Naive thymus-derived CD4-positive, alpha-beta T cell (primary cell): ENCODE measurements at regions of chrX and their contacts with region 1.

Region 1: DNA sequence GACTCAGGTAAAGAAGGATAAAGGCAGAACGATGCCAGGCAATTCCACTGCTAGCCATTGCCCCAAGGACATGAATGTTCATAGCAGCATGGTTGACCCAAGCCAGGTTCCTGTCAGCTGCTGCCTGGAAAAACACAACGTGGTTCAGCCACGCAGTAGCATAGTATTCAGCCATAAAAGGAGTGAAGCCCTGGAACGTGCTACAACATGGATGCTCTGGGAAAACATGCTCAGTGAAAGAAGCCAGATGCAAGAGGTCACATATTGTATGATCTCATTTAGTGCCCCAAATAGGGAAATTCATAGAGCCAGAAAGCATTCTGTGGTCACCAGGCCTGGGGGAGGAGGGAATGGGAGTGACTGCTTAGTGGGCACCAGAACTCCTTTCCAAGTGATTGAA is 129.8 kb downstream of the GPR143 start:
- DNase-seq: no peak
- ATAC-seq: no peak
- H3K4me3 ChIP-seq: no peak overlapping the region
- H3K4me3 Mint-ChIP-seq: no peak overlapping the region
- H3K27ac ChIP-seq: no peak overlapping the region
- H3K27ac Mint-ChIP-seq: no peak overlapping the region
- H3K4me1 ChIP-seq: no peaks in the 10 kb centered on the region
- H3K4me1 Mint-ChIP-seq: peaks cover 6 to 45% (median 32%) of the 10 kb centered on the region in 7 donors
- H3K27me3 ChIP-seq: no peaks in the 10 kb centered on the region
- H3K27me3 Mint-ChIP-seq: no peaks in the 10 kb centered on the region

Region 2: GRCh38 chrX:9390121-9390520 is 245.7 kb before region 1 on chrX:
- CTCF ChIA-PET with region 1: no interaction called
- POLR2A ChIA-PET with region 1: no interaction called
- intact Hi-C with region 1: no loop called
- DNase-seq: no peak
- ATAC-seq: no peak
- H3K4me3 ChIP-seq: no peak overlapping the region
- H3K4me3 Mint-ChIP-seq: no peak overlapping the region
- H3K27ac ChIP-seq: no peak overlapping the region
- H3K27ac Mint-ChIP-seq: no peak overlapping the region
- H3K4me1 ChIP-seq: no peaks in the 10 kb centered on the region
- H3K4me1 Mint-ChIP-seq: no peaks in the 10 kb centered on the region
- H3K27me3 ChIP-seq: no peaks in the 10 kb centered on the region
- H3K27me3 Mint-ChIP-seq: peaks cover 0 to 3% (median 0%) of the 10 kb centered on the region in 5 donors

Region 3: DNA sequence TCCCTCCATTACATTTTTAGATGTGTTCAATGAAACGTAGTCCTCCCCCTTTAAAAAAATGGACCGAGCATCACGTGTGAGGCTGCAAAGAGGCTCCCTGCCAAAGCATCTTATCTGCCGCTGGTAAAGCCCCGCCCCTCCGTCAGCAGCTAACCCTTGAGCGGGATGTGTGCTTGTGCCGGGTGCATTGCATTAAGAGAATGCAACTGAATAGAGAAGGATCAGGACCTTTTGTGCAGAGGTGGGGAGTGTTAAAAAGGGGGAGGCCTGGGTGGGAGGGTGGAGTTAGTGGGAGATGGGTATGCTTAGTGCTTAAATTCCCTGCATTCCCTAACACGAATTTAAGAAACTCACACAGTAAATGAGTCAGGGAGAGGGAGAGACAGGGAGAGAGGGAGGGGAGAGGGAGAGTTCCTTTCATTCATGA is 104.9 kb before region 1 on chrX:
- CTCF ChIA-PET with region 1: no interaction called
- POLR2A ChIA-PET with region 1: no interaction called
- intact Hi-C with region 1: loop called in 1 of 2 experiments (anchors 10 kb)
- DNase-seq: peak; percentile 9 to 62 (median 43)
- ATAC-seq: peak; percentile 90
- H3K4me3 ChIP-seq: no peak overlapping the region
- H3K4me3 Mint-ChIP-seq: peak overlapping the region; percentile 70 to 89 (median 76)
- H3K27ac ChIP-seq: no peak overlapping the region
- H3K27ac Mint-ChIP-seq: peak overlapping the region in 8 of 9 donors; percentile 3 to 86 (median 38)
- H3K4me1 ChIP-seq: peaks cover 6 to 13% of the 10 kb centered on the region in 2 donors
- H3K4me1 Mint-ChIP-seq: peaks cover 20 to 69% (median 66%) of the 10 kb centered on the region in 7 donors
- H3K27me3 ChIP-seq: no peaks in the 10 kb centered on the region
- H3K27me3 Mint-ChIP-seq: no peaks in the 10 kb centered on the region

Region 4: DNA sequence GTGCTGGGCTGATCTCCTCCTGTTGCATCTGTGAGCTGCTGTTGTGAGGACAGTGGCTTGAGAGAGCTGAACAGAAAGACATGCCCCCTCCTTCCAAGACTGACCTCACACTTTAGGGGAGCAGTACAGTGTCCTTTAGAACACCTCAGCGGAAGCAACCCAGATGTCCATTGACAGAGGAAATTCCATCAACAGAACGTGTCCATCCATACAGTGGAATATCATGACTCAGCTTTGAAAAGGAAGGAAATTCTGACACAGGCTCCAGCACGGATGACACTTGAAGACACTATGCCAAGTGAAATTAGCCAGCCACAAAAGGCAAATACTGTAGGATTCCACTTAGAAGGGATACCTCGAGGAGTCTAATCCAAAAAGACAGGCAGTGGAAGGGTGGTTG is 26.3 kb after region 1 on chrX:
- CTCF ChIA-PET with region 1: no interaction called
- POLR2A ChIA-PET with region 1: no interaction called
- intact Hi-C with region 1: no loop called
- DNase-seq: no peak
- ATAC-seq: no peak
- H3K4me3 ChIP-seq: no peak overlapping the region
- H3K4me3 Mint-ChIP-seq: no peak overlapping the region
- H3K27ac ChIP-seq: no peak overlapping the region
- H3K27ac Mint-ChIP-seq: no peak overlapping the region
- H3K4me1 ChIP-seq: no peaks in the 10 kb centered on the region
- H3K4me1 Mint-ChIP-seq: peaks cover 0 to 19% (median 0%) of the 10 kb centered on the region in 7 donors
- H3K27me3 ChIP-seq: no peaks in the 10 kb centered on the region
- H3K27me3 Mint-ChIP-seq: no peaks in the 10 kb centered on the region